ENCODE measurements at regions of chr11 and their contacts with region 1.

Region 1: DNA sequence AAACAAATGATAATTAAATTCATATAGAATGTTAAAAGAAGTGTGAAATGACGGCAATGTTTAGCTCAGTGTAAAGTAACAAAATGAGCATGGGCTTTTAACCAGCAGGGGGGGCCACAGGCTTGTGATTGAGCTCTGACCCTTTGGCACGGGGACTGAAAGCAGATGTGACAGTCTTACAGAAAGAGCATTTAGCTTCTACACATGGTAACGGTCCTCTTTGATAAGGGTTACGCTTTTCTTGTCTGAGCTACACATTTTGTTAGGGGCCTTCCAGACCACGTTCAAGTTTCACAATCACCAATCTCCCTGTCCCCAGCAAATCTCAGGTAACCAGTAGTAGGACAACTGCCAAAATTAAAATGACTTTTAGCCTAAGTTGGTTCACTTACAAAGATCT is 262.5 kb downstream of the DCDC1 start:
- DNase-seq: peak; percentile 38 to 87
- H3K4me3 ChIP-seq: no peak overlapping the region
- CTCF ChIP-seq: no peak
- POLR2A ChIP-seq: no peak

Region 2: GRCh38 chr11:31233424-31233823 is 126.4 kb after region 1 on chr11:
- intact Hi-C with region 1: loop called (anchors 5 kb)
- DNase-seq: no peak
- H3K4me3 ChIP-seq: no peak overlapping the region
- CTCF ChIP-seq: no peak
- POLR2A ChIP-seq: no peak

Region 3: DNA sequence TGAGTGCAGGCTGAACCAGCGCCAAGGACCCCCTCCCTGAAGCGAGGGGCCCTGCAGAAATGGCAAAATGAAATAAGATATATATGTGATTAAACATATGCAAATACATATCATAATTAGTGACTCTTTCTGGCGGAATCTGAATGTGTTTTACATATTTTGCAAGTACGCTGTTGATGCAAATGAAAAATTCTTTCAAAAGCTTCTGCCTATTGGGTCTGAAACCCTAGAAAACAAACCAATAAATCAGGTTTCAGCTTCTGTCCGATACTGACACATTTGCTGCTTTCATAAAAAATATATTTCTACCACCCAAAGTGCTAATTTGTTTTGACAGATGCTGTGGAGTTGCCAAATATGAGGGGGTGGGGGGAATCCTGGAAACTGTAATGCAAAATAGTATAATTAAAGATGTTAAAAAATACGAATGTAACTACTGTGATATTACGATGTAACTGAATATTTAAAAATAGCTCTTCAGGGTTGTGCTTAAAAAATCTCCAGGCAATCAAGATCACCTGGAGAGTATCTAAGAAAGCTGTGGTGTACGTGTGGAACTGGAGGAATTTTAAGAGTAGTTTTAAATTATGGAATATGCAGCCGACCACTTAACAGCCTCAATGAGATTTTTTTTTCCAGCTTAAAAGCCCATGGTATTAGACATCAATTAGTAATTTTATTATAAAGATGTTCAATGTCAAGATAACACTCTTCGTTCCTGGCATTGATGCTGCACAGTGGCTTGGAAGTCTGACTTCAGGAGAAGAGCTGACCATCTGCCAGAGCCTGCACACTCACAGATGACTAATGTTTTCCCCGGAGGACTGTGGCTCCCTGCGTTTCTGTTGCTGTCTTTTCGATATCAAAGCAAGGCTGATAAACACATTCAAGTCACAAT is 861.6 kb after region 1 on chr11:
- intact Hi-C with region 1: loop called (anchors 10 kb)
- DNase-seq: no peak
- H3K4me3 ChIP-seq: no peak overlapping the region
- CTCF ChIP-seq: no peak
- POLR2A ChIP-seq: no peak

Measured in lower leg skin (tissue), 4 donors.